Activated CD8-positive, alpha-beta T cell treated with anti-CD3 and anti-CD28 coated beads for 36 hours (primary cell): ENCODE measurements at regions of chr21 and their contacts with region 1.

Region 1: GRCh38 chr21:33299181-33299752 is 25.5 kb upstream of the IFNAR1 start:
- DNase-seq: peak; percentile 69
- ATAC-seq: peak; percentile 97
- H3K4me3 Mint-ChIP-seq: peak overlapping the region; percentile 13
- H3K27ac Mint-ChIP-seq: peak overlapping the region; percentile 77
- H3K4me1 Mint-ChIP-seq: peaks cover 38% of the 10 kb centered on the region
- H3K27me3 Mint-ChIP-seq: no peaks in the 10 kb centered on the region
- CTCF ChIP-seq: no peak

Region 2: DNA sequence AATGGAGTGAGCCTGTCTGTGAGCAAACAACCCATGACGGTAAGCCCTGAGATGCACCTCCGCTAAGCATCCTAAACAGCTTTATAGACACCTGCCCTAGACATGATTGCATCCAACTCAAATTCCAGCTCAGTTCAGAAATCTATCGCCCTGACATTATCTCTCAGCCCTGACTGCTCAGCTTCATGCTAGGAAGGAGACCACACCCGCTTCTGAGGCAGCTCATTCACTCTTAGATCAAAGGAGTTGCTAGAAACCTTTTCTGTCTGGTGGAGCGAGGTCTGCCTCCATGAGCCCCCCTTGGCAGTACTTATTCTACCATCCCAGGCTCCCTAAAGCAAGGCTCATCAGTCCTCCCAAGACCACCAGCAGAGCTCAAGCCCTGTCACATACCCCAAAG is 16.1 kb before region 1 on chr21:
- CTCF ChIA-PET with region 1: interaction called, 10 read pairs
- POLR2A ChIA-PET with region 1: no interaction called
- intact Hi-C with region 1: no loop called
- DNase-seq: no peak
- ATAC-seq: no peak
- H3K4me3 Mint-ChIP-seq: no peak overlapping the region
- H3K27ac Mint-ChIP-seq: no peak overlapping the region
- H3K4me1 Mint-ChIP-seq: peaks cover 1% of the 10 kb centered on the region
- H3K27me3 Mint-ChIP-seq: no peaks in the 10 kb centered on the region
- CTCF ChIP-seq: no peak

Region 3: GRCh38 chr21:33383056-33383888 is 84.0 kb after region 1 on chr21:
- CTCF ChIA-PET with region 1: no interaction called
- POLR2A ChIA-PET with region 1: no interaction called
- intact Hi-C with region 1: no loop called
- DNase-seq: peak; percentile 95
- ATAC-seq: peak; percentile 67
- H3K4me3 Mint-ChIP-seq: peak overlapping the region; percentile 59
- H3K27ac Mint-ChIP-seq: peak overlapping the region; percentile 74
- H3K4me1 Mint-ChIP-seq: peaks cover 63% of the 10 kb centered on the region
- H3K27me3 Mint-ChIP-seq: peaks cover 7% of the 10 kb centered on the region
- CTCF ChIP-seq: no peak